ENCODE measurements at regions of chr17 and their contacts with region 1.

Region 1: GRCh38 chr17:39057701-39058206 is 90.6 kb upstream of the FBXO47 start:
- DNase-seq: no peak

Region 2: GRCh38 chr17:38994026-38994425 is 63.7 kb before region 1 on chr17:
- CTCF ChIA-PET with region 1: interaction called, 13 read pairs
- POLR2A ChIA-PET with region 1: no interaction called
- DNase-seq: no peak

Region 3: GRCh38 chr17:39092692-39093230 is 35.0 kb after region 1 on chr17:
- CTCF ChIA-PET with region 1: no interaction called
- POLR2A ChIA-PET with region 1: no interaction called
- DNase-seq: no peak

Measured in HEK293T (cell line).